IMR-90 (cell line): ENCODE measurements at regions of chr7 and their contacts with region 1.

Region 1: GRCh38 chr7:13551503-13551902 is 438.0 kb downstream of the ETV1 start:
- DNase-seq: no peak
- ATAC-seq: no peak
- H3K4me3 ChIP-seq: no peak overlapping the region
- H3K27ac ChIP-seq: no peak overlapping the region
- H3K4me1 ChIP-seq: no peaks in the 10 kb centered on the region
- H3K27me3 ChIP-seq: no peaks in the 10 kb centered on the region
- CTCF ChIP-seq: no peak
- POLR2A ChIP-seq: no peak
- RAD21 ChIP-seq: no peak

Region 2: DNA sequence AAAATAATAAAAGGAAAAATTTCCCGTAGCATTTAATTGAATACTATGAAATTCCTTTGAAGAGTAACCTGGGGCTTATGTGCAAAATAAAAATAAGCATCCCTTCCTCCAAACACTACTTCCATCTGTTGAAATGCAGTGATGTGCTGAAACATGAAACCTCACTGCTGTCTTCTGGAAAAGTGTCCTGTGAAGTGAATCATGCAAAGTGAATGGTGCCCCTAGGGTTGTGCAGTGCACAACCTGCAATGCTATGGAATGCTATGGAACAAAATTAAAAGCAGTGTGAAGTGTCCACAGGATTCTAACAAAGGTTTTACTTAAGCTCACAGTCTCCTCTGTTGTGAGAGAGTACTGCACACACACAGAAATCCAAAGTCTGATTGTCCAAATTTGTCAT is 42.9 kb before region 1 on chr7:
- CTCF ChIA-PET with region 1: no interaction called
- POLR2A ChIA-PET with region 1: no interaction called
- dilution Hi-C with region 1: no loop called
- in situ Hi-C with region 1: no loop called
- intact Hi-C with region 1: no loop called
- DNase-seq: no peak
- ATAC-seq: no peak
- H3K4me3 ChIP-seq: no peak overlapping the region
- H3K27ac ChIP-seq: no peak overlapping the region
- H3K4me1 ChIP-seq: no peaks in the 10 kb centered on the region
- H3K27me3 ChIP-seq: no peaks in the 10 kb centered on the region
- CTCF ChIP-seq: no peak
- POLR2A ChIP-seq: no peak
- RAD21 ChIP-seq: no peak

Region 3: DNA sequence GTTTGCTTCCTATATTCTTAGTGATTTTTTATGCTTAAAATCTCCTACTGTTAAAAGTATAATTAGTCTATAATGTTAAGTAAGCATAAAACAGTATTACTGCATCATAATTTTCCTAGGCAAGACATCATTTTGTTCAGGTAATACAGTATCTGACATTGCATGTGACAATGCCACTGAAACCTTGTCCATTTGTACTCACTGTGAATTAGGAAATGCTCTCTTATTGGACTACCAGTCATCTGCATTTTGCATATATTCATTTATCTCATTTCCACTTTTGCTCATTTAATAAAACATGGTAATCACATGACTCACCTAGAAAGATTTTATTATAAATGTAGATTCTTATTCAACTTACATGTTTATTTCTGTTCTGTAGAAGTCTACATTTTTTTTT is 58.9 kb after region 1 on chr7:
- CTCF ChIA-PET with region 1: no interaction called
- POLR2A ChIA-PET with region 1: no interaction called
- dilution Hi-C with region 1: no loop called
- in situ Hi-C with region 1: no loop called
- intact Hi-C with region 1: loop called (anchors 10 kb)
- DNase-seq: no peak
- ATAC-seq: no peak
- H3K4me3 ChIP-seq: no peak overlapping the region
- H3K27ac ChIP-seq: no peak overlapping the region
- H3K4me1 ChIP-seq: no peaks in the 10 kb centered on the region
- H3K27me3 ChIP-seq: no peaks in the 10 kb centered on the region
- CTCF ChIP-seq: no peak
- POLR2A ChIP-seq: no peak
- RAD21 ChIP-seq: no peak